Heart left ventricle (tissue), 16 donors: ENCODE measurements at regions of chr4 and their contacts with region 1.

Region 1: DNA sequence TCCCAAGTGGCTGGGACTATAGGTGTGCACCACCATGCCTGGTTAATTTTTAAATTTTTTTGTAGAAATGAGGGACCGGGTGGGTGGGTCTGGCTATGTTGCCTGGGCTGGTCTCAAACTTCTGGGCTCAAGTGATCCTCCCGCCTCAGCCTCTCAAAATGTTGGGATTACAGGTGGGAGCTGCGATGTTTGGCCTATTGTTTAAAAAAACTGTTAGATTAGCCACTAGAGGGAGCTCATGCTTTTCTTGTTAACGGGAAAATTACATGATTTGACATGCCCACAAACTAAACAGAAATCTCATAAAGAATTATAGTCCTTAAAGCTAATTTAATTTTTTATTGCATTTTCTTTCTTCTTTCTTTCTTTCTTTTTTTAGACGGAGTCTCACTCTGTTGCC is 5.0 kb upstream of the SDAD1 start:
- DNase-seq: no peak
- ATAC-seq: no peak
- H3K4me3 ChIP-seq: no peak overlapping the region
- H3K27ac ChIP-seq: no peak overlapping the region
- H3K4me1 ChIP-seq: peaks cover 0 to 6% (median 0%) of the 10 kb centered on the region in 12 donors
- H3K27me3 ChIP-seq: no peaks in the 10 kb centered on the region
- CTCF ChIP-seq: peak; percentile 55 to 85 (median 72)
- POLR2A ChIP-seq: no peak

Region 2: DNA sequence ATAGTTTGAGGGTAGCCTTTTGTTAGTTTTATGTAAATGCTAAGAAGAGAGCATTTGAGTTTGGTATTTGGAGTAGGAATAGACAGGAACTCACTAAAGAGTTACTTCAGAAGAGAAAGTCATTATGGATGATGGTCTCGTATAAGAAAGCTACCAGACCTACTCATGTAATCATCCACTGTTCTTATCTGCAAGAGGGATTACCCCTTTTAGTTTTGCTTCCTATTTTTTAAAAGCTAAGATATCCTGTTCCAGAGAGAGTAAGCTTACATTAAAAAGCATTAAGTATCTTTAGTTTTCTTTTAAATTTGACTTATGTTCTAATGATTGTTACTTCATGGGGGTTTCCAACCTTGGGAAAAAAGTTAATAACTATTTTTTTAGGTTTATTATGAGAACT is 66.3 kb after region 1 on chr4:
- intact Hi-C with region 1: loop called in 9 of 10 experiments (anchors 1 to 2 kb)
- DNase-seq: no peak
- ATAC-seq: no peak
- H3K4me3 ChIP-seq: no peak overlapping the region
- H3K27ac ChIP-seq: no peak overlapping the region
- H3K4me1 ChIP-seq: peaks cover 0 to 14% (median 0%) of the 10 kb centered on the region in 12 donors
- H3K27me3 ChIP-seq: peaks cover 0 to 4% (median 0%) of the 10 kb centered on the region in 9 donors
- CTCF ChIP-seq: no peak
- POLR2A ChIP-seq: no peak

Region 3: DNA sequence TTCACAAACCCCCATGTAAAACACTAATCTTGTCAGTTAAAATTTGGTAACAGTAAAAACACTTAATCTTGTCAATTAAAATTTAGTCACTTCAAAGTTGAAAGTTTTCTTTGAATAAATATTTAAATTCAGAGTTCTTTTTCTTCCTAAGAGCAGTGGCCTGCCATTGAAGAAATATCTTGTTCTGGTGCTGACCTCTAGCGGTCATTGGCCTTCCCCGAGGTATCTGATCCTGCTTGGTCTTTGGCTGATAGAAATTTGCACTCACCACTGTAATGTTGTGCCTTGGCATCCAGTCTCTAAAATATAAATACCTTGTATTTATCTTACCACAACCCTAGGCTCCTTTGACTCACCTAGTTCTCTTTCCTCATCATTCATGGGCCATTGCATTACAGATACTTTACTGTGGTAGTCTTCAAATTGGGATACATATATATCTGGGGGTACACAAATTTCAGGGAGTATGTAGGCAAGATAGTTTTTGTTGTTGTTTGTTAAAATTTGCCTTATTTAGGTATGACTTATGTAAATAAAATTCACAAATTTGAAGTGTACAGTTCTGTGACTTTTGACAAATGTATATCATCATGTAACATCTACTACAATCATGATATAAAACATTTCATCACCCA is 72.0 kb after region 1 on chr4:
- intact Hi-C with region 1: loop called (anchors 1 to 2 kb)
- DNase-seq: peak in 4 of 5 donors; percentile 62 to 74 (median 70)
- ATAC-seq: peak; percentile 39 to 87 (median 80)
- H3K4me3 ChIP-seq: no peak overlapping the region
- H3K27ac ChIP-seq: no peak overlapping the region
- H3K4me1 ChIP-seq: peaks cover 0 to 4% (median 0%) of the 10 kb centered on the region in 12 donors
- H3K27me3 ChIP-seq: no peaks in the 10 kb centered on the region
- CTCF ChIP-seq: peak; percentile 77 to 96 (median 92)
- POLR2A ChIP-seq: no peak

Region 4: DNA sequence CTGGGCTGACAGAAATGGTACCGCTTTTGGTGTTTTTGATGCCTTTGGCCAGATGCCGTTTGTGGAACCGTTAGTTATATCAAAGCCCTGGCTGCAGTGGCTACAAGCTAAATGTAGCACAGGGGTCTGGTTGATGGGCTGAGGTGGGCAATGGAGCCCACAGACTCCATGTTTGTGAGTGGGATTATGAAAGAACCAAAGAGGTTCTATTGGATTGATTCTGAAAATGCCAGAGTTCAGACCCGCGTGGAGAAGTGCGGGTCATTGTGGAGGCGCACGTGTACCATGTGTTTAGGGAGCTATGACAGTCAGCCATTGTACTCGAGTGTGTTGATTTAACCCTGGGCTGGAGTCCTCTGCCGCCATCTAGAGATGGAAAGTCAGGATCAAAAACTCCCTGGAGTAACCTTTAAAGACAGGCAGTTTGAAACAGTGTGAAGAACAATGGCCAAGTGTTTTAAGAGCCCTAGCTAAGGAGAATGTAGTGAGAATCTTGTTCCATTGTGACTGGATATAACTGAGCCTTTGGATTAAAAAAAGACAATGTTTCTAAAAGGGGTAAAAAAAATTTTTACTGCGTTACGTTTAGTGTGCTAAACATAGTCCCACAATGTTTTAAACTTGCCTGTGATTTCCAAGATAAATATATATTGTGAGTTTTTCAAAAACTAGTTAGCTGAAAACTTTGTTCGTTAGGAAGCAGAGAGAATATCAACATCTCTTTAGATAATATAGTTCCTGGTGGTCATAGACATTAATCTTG is 91.5 kb after region 1 on chr4:
- intact Hi-C with region 1: loop called in 5 of 10 experiments (anchors 1 to 5 kb)
- DNase-seq: peak in 4 of 5 donors; percentile 33 to 53 (median 40)
- ATAC-seq: peak; percentile 54 to 88 (median 88)
- H3K4me3 ChIP-seq: peak overlapping the region in 6 of 12 donors; percentile 15 to 40 (median 30)
- H3K27ac ChIP-seq: peak overlapping the region in 2 of 12 donors; percentile 19 to 44
- H3K4me1 ChIP-seq: peaks cover 0 to 38% (median 19%) of the 10 kb centered on the region in 12 donors
- H3K27me3 ChIP-seq: no peaks in the 10 kb centered on the region
- CTCF ChIP-seq: peak; percentile 13 to 69 (median 56)
- POLR2A ChIP-seq: no peak

Region 5: DNA sequence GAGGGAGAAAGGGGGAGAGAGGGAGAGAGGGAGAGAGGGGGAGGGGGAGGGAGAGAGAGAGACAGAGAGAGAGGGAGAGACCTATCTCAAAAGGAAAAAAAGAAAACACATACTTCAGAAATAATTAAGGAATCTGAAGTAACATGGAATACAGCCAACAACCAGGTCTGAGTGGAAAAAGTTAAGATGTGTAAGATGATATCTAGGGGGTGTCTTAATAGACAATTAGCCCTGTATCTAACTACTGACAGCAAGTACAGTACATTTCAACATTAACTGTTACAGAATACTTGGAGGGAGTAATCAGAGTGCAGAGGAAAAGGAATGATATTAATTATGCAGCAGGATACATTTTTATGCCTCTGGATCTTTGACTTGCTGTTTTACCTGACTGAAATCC is 130.1 kb after region 1 on chr4:
- intact Hi-C with region 1: no loop called
- DNase-seq: no peak
- ATAC-seq: no peak
- H3K4me3 ChIP-seq: no peak overlapping the region
- H3K27ac ChIP-seq: no peak overlapping the region
- H3K4me1 ChIP-seq: no peaks in the 10 kb centered on the region
- H3K27me3 ChIP-seq: no peaks in the 10 kb centered on the region
- CTCF ChIP-seq: no peak
- POLR2A ChIP-seq: no peak

Region 6: DNA sequence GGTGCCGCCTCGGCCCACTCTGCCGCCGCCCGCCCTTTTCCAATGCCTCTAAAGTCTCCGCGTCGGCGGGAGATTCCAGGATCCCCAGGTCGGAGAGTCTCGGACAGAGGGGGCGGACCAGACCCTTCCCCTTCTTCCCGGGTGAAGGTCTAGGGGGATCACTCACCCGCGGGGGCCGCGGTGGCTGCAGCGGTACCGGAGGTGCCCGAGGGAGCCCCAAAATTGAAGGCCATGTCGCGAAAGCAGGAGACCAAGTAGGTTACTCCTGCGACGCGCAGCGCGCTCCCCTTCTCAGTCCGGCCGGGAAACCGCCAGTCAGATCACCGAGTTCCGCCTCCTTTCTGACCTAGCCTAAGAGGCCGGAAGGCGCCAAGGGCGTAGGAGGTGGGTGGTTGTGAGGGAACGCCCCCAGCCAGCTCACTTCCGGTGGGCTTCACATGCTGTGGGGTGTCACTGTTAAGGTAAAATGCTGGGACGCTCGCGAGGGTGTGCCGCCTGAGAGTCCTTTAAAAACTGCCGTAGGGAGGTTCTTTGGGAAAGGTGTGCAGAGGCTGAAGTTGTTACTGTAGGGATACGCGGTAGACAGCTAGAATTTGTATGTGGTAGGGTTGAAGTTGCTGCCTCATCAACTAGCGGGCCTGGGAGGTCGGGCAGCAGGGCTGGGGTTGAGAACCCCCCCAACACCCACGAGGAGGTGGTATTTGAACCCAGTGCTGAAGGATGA is 152.6 kb after region 1 on chr4 and contains the start of gene NUP54:
- intact Hi-C with region 1: loop called in 5 of 10 experiments (anchors 1 to 10 kb)
- DNase-seq: peak; percentile 93 to 96 (median 95)
- ATAC-seq: peak; percentile 99 to 100 (median 99)
- H3K4me3 ChIP-seq: peak within 1 kb of the TSS; percentile 65 to 97 (median 93)
- H3K27ac ChIP-seq: peak within 1 kb of the TSS; percentile 40 to 94 (median 88)
- H3K4me1 ChIP-seq: peaks cover 6 to 30% (median 25%) of the 10 kb centered on the region in 12 donors
- H3K27me3 ChIP-seq: no peaks in the 10 kb centered on the region
- CTCF ChIP-seq: no peak
- POLR2A ChIP-seq: peak in 1 of 2 donors; percentile 70
- total RNA-seq, gene NUP54: 14.2 to 26.7 (median 18.1) TPM

Region 7: GRCh38 chr4:76504613-76505465 is 509.1 kb after region 1 on chr4:
- intact Hi-C with region 1: loop called in 1 of 10 experiments (anchors 10 kb)
- DNase-seq: no peak
- ATAC-seq: peak in 2 of 4 donors; percentile 45 to 47
- H3K4me3 ChIP-seq: no peak overlapping the region
- H3K27ac ChIP-seq: no peak overlapping the region
- H3K4me1 ChIP-seq: no peaks in the 10 kb centered on the region
- H3K27me3 ChIP-seq: no peaks in the 10 kb centered on the region
- CTCF ChIP-seq: peak; percentile 49 to 78 (median 67)
- POLR2A ChIP-seq: no peak